ENCODE measurements at regions of chr19 and their contacts with region 1.

Region 1: DNA sequence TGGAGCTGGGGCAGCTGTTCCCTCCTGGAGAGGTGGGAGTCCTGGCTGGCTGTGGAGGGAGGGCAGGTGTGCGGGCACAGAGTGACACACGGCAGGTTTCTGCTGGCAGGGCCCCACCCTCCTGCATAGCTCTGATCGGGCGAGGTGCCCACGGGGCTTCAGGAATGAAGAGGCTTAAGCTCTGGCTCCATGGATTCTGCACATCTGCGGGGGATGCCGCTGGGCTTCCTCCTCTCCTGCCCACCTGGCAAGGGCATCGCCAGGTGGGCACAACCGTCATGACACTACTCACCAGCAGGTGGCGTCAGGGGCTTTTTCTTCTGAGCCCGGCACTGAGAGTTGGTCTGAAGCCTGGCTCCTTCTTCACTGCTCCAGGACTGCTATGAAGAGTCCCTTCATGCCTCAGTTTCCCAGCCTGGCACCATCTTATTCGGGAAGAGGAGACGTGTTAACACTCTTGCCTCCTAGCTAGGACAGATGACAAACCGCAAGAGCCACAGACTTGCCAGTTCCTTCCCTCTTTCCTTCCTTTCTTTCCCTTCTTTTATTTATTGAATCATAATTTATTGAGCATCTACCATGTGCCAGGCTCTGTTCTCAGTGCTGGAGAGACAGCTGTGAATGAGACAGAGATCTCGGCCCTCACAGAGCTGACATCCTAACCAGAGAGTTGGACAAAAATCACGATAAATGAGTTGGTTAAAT is 15.2 kb upstream of the PAK4 start:
- DNase-seq: peak; percentile 86
- H3K4me3 Mint-ChIP-seq: no peak overlapping the region
- H3K27ac Mint-ChIP-seq: no peak overlapping the region
- H3K4me1 Mint-ChIP-seq: peaks cover 5% of the 10 kb centered on the region
- H3K27me3 Mint-ChIP-seq: no peaks in the 10 kb centered on the region

Region 2: DNA sequence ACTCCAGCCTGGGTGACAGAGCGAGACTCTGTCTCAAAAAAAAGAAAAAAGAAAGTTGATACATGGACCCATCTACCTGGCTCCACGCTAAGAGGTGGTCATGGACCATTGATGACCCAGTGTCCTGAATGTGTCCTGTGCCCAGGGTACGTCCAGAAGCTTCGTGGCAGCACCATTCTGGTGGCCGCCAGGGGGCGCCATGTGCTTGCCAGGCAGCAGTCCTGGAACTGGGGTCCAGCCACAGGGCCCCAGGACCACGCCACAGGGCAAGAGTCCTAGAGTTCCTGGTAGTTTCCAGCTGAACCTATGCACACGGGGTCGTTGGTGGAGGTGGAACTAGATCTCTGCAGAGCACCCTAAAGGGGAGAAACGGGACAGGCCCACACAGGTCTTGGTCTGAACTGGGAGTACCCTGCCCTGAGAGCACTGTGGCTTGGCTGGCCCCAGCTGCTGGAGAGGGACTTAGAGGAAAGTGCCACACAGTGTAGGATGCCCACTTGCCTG is 58.1 kb before region 1 on chr19:
- CTCF ChIA-PET with region 1: interaction called, 5 read pairs
- intact Hi-C with region 1: loop called (anchors 1 kb)
- DNase-seq: peak; percentile 74
- H3K4me3 Mint-ChIP-seq: no peak overlapping the region
- H3K27ac Mint-ChIP-seq: no peak overlapping the region
- H3K4me1 Mint-ChIP-seq: no peaks in the 10 kb centered on the region
- H3K27me3 Mint-ChIP-seq: peaks cover 2% of the 10 kb centered on the region